MCF 10A (cell line): ENCODE measurements at regions of chr13 and their contacts with region 1.

Region 1: DNA sequence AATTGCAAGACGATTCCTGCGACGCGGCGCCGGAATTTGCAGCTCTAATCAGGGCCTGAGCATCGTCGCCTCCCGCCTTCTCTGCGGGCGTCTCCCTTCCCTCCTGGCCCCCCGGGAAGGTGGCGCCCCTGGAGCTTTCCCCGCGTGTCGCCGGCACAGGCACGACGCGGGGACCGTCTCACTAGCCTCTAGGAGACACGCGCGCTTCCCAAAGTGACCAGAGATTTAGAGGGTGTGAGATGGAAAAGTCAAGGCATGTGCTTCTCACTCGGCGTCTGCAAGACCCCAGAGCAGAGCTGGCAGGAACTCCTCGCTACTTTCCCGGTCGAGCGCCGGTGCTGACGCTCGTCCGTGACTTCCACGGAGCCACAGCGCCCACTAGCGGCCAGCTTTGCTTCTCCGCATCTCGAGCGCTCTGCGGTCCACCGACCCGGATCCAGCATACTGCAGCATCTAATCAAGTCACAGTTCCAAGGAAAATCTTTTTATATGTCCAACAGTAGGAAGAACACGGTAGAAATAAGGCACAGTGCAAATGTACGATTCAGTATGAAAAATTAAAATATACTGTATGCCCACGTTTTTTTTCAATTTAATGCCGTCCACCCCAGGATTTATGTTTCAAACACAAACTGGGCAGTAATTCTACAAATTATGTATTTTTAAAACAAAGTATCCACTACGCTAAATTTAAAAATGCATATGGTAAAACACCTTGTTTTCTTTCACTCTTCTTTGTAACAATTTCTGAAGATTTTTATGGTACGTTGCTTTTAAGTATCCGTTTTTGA is 977 bp upstream of the EFNB2 start:
- DNase-seq: peak; percentile 84
- H3K4me3 Mint-ChIP-seq: peak overlapping the region; percentile 95
- H3K27ac Mint-ChIP-seq: peak overlapping the region; percentile 46
- H3K4me1 Mint-ChIP-seq: no peaks in the 10 kb centered on the region
- H3K27me3 Mint-ChIP-seq: no peaks in the 10 kb centered on the region
- CTCF ChIP-seq: peak; percentile 91

Region 2: GRCh38 chr13:105202354-105202753 is 1334.1 kb before region 1 on chr13:
- CTCF ChIA-PET with region 1: no interaction called
- POLR2A ChIA-PET with region 1: interaction called, 3 read pairs
- intact Hi-C with region 1: loop called (anchors 10 kb)
- DNase-seq: peak; percentile 34
- H3K4me3 Mint-ChIP-seq: no peak overlapping the region
- H3K27ac Mint-ChIP-seq: no peak overlapping the region
- H3K4me1 Mint-ChIP-seq: no peaks in the 10 kb centered on the region
- H3K27me3 Mint-ChIP-seq: no peaks in the 10 kb centered on the region
- CTCF ChIP-seq: peak; percentile 12

Region 3: GRCh38 chr13:105918842-105919741 is 617.3 kb before region 1 on chr13:
- CTCF ChIA-PET with region 1: no interaction called
- POLR2A ChIA-PET with region 1: no interaction called
- intact Hi-C with region 1: loop called (anchors 5 kb)
- DNase-seq: peak; percentile 83
- H3K4me3 Mint-ChIP-seq: peak overlapping the region; percentile 68
- H3K27ac Mint-ChIP-seq: peak overlapping the region; percentile 17
- H3K4me1 Mint-ChIP-seq: peaks cover 32% of the 10 kb centered on the region
- H3K27me3 Mint-ChIP-seq: no peaks in the 10 kb centered on the region
- CTCF ChIP-seq: no peak

Region 4: GRCh38 chr13:106151056-106151699 is 385.3 kb before region 1 on chr13:
- CTCF ChIA-PET with region 1: interaction called, 3 read pairs
- POLR2A ChIA-PET with region 1: interaction called, 10 read pairs
- intact Hi-C with region 1: loop called (anchors 5 kb)
- DNase-seq: peak; percentile 97
- H3K4me3 Mint-ChIP-seq: peak overlapping the region; percentile 47
- H3K27ac Mint-ChIP-seq: peak overlapping the region; percentile 96
- H3K4me1 Mint-ChIP-seq: peaks cover 59% of the 10 kb centered on the region
- H3K27me3 Mint-ChIP-seq: no peaks in the 10 kb centered on the region
- CTCF ChIP-seq: no peak

Region 5: GRCh38 chr13:106513025-106513983 is 23.1 kb before region 1 on chr13:
- CTCF ChIA-PET with region 1: interaction called, 6 read pairs
- POLR2A ChIA-PET with region 1: interaction called, 15 read pairs
- intact Hi-C with region 1: loop called (anchors 1 kb)
- DNase-seq: peak; percentile 78
- H3K4me3 Mint-ChIP-seq: peak overlapping the region; percentile 45
- H3K27ac Mint-ChIP-seq: peak overlapping the region; percentile 96
- H3K4me1 Mint-ChIP-seq: peaks cover 32% of the 10 kb centered on the region
- H3K27me3 Mint-ChIP-seq: no peaks in the 10 kb centered on the region
- CTCF ChIP-seq: no peak

Region 6: GRCh38 chr13:106917673-106918556 is 381.5 kb after region 1 on chr13:
- CTCF ChIA-PET with region 1: interaction called, 8 read pairs
- POLR2A ChIA-PET with region 1: interaction called, 5 read pairs
- intact Hi-C with region 1: loop called (anchors 1 kb)
- DNase-seq: peak; percentile 75
- H3K4me3 Mint-ChIP-seq: peak overlapping the region; percentile 74
- H3K27ac Mint-ChIP-seq: peak overlapping the region; percentile 31
- H3K4me1 Mint-ChIP-seq: no peaks in the 10 kb centered on the region
- H3K27me3 Mint-ChIP-seq: no peaks in the 10 kb centered on the region
- CTCF ChIP-seq: peak; percentile 90